ENCODE measurements at regions of chr1 and their contacts with region 1.

Region 1: DNA sequence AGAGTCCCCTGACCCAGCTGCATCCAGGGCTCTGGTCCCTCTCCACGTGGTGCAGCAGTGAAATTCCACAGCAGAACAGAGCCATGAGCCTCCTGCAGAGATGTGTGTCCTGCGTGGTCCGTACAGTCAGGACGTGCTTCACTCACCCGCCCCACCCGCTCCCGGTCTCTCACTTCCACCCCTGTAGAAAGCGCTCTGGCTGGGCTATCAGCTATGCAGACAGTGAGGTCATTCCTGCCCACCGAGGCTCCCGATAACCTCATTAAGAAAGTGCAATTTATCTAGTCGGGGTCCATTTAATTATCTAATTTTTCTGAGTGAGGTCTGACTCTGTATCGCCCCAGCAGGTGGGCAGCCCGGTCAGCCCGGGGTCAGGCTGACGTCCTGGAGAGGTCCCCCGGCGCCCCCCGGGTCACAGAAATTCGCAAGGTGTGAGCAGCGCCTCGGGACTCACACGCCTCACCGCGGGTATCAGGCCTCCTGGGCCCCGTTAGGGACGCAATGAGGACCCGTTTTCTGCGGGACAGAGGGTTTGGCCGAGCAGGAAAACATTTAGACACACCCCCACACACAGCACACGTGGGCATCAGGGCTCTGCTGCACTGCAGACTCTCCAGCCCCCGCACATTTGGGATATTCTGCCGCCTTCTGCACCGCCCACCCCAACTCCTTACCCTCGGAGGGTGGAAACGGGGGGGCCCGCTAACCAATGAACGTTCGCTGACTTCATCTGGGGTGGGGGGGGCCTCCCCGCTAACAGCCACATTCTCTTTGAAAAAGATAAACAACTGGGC is 76.7 kb downstream of the PRDM16 start:
- DNase-seq: no peak
- H3K4me3 ChIP-seq: no peak overlapping the region
- H3K27ac ChIP-seq: peak overlapping the region in 1 of 2 donors; percentile 11
- H3K4me1 ChIP-seq: peaks cover 7 to 34% of the 10 kb centered on the region in 2 donors
- H3K27me3 ChIP-seq: no peaks in the 10 kb centered on the region
- CTCF ChIP-seq: no peak

Region 2: GRCh38 chr1:3078430-3078861 is 67.3 kb before region 1 on chr1:
- intact Hi-C with region 1: no loop called
- DNase-seq: no peak
- H3K4me3 ChIP-seq: peak overlapping the region; percentile 35 to 37
- H3K27ac ChIP-seq: peak overlapping the region; percentile 99 to 100
- H3K4me1 ChIP-seq: peaks cover 36 to 72% of the 10 kb centered on the region in 2 donors
- H3K27me3 ChIP-seq: no peaks in the 10 kb centered on the region
- CTCF ChIP-seq: no peak

Region 3: GRCh38 chr1:3161176-3161840 is 15.6 kb after region 1 on chr1:
- intact Hi-C with region 1: loop called (anchors 2 kb)
- DNase-seq: no peak
- H3K4me3 ChIP-seq: peak overlapping the region; percentile 14 to 28
- H3K27ac ChIP-seq: peak overlapping the region; percentile 75 to 79
- H3K4me1 ChIP-seq: peaks cover 5 to 38% of the 10 kb centered on the region in 2 donors
- H3K27me3 ChIP-seq: no peaks in the 10 kb centered on the region
- CTCF ChIP-seq: no peak

Measured in ascending aorta (tissue), 2 donors.